H1 (cell line): ENCODE measurements at regions of chr15 and their contacts with region 1.

Region 1: DNA sequence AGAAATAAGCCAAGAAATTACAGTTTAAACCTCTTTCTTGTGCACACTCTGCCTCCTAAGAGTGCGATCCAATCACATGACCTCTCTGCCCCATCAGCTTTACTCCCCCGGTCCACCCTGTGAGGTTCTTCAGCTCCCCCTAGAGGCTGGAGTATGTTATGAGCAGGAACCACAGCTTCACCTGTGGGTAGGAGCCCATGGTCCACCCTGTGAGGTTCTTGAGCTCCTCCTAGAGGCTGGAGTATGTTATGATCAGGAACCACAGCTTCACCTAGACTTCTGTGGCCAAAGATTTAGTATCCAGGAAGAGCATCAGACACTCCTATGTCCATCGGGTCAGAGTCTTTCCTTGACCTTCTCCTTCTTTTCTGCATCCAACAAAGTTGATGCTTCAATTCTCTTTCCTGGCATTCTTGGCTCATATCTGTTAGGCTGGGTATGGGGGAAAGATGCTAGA is 163.9 kb downstream of the MINAR1 start:
- DNase-seq: peak; percentile 58 to 73
- H3K4me3 ChIP-seq: no peak overlapping the region
- H3K27ac ChIP-seq: no peak overlapping the region
- H3K4me1 ChIP-seq: no peaks in the 10 kb centered on the region
- H3K27me3 ChIP-seq: peaks cover 0 to under 1% (median 0%) of the 10 kb centered on the region in 4 experiments; a peak in 2 of 7 replicates
- CTCF ChIP-seq: peak; percentile 88 to 100 (median 100)
- EP300 ChIP-seq: no peak
- POLR2A ChIP-seq: no peak
- RAD21 ChIP-seq: peak; percentile 99 to 100

Region 2: GRCh38 chr15:79339564-79340314 is 256.3 kb before region 1 on chr15:
- CTCF ChIA-PET with region 1: interaction called, 137 read pairs
- POLR2A ChIA-PET with region 1: no interaction called
- DNase-seq: no peak
- H3K4me3 ChIP-seq: no peak overlapping the region
- H3K27ac ChIP-seq: no peak overlapping the region
- H3K4me1 ChIP-seq: no peaks in the 10 kb centered on the region
- H3K27me3 ChIP-seq: no peaks in the 10 kb centered on the region
- CTCF ChIP-seq: peak in 2 of 3 experiments; percentile 64 to 78; a peak in 2 of 4 replicates
- EP300 ChIP-seq: no peak
- POLR2A ChIP-seq: no peak
- RAD21 ChIP-seq: peak; percentile 82 to 86

Region 3: DNA sequence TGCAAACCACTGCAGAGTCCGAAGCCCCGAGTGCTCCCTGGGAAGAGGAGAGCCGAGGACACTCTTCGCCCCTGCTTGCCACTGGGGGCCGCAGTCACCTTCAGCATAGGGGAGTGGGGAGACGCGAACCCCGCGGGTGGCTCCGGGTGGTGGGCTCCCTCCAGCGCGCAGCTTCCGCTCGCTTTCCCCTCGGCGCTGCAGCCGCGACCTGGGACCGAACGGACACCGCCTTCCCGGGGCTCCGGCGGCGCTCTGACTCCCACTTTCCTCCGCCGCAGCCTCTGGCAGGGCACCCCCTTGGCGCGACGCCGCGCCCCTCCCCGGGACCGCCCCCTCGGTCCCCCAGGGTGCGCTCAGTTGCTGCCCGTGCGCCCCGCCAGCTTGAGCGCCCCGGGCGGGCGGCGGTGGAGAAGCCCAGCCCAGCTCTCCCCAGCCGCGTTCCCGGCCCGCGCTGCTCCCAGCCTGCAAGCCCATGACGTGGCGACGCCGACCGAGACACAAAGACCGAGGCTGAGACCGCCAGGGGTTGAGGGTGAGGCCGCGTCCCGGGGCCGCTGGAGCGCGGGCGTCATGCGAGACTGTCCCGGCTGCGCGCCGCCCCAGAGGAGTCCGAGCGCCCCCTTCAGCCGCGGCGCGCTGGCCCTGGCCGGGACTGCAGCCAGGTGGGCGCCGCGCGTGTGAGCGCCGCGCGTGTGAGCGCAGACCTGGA is 164.3 kb before region 1 on chr15 and contains the start of gene MINAR1:
- CTCF ChIA-PET with region 1: interaction called, 27 read pairs
- POLR2A ChIA-PET with region 1: interaction called, 3 read pairs
- DNase-seq: peak in 1 of 2 experiments; percentile 61
- H3K4me3 ChIP-seq: peak within 1 kb of the TSS; percentile 29 to 68 (median 46)
- H3K27ac ChIP-seq: no peak within 1 kb of the TSS
- H3K4me1 ChIP-seq: peaks cover 0 to 11% (median 6%) of the 10 kb centered on the region in 4 experiments; a peak in 6 of 7 replicates
- H3K27me3 ChIP-seq: peaks cover 34 to 57% (median 49%) of the 10 kb centered on the region in 4 experiments
- CTCF ChIP-seq: peak; percentile 6 to 40 (median 33); a peak in 3 of 4 replicates
- EP300 ChIP-seq: no peak
- POLR2A ChIP-seq: no peak
- RAD21 ChIP-seq: peak; percentile 19 to 48; a peak in 3 of 4 replicates
- total RNA-seq, gene MINAR1: 0.59 and 0.67 TPM in 2 replicates

Region 4: DNA sequence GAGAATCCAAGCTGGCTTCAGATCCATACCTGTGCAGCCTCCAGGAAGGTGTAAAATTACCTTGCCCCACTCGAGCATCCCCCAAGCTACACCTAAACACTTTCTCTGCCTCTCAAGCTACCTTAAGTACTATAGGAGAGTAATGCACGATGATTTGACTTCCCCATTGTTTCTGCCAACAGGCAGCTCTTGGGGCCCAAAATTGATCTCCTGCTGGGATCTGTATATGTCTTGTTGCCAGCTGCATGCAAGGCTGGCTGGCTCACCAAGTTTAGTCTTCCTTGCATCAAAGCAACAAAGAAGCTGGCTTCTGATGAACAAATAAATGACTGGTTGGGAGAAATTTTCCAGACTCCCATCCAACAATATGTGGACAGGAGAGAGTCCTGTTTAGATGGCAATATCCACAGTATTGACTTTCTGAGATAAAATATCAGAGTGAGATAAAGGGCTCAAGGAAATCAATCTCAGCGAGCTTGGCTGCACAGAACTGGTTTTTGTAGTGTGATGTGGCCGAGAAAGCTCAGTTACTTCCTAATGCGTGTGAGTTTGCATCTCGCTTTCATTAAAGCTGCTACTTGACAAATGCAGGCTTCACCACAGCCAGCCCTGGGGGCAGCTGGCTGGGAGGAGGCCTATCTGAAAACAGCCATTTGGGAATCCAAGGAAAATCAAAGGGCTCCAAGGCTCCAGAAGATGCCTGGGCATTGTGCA is 23.2 kb before region 1 on chr15:
- CTCF ChIA-PET with region 1: interaction called, 35 read pairs
- POLR2A ChIA-PET with region 1: no interaction called
- DNase-seq: no peak
- H3K4me3 ChIP-seq: no peak overlapping the region
- H3K27ac ChIP-seq: no peak overlapping the region
- H3K4me1 ChIP-seq: no peaks in the 10 kb centered on the region
- H3K27me3 ChIP-seq: no peaks in the 10 kb centered on the region
- CTCF ChIP-seq: no peak
- EP300 ChIP-seq: no peak
- POLR2A ChIP-seq: no peak
- RAD21 ChIP-seq: no peak

Region 5: DNA sequence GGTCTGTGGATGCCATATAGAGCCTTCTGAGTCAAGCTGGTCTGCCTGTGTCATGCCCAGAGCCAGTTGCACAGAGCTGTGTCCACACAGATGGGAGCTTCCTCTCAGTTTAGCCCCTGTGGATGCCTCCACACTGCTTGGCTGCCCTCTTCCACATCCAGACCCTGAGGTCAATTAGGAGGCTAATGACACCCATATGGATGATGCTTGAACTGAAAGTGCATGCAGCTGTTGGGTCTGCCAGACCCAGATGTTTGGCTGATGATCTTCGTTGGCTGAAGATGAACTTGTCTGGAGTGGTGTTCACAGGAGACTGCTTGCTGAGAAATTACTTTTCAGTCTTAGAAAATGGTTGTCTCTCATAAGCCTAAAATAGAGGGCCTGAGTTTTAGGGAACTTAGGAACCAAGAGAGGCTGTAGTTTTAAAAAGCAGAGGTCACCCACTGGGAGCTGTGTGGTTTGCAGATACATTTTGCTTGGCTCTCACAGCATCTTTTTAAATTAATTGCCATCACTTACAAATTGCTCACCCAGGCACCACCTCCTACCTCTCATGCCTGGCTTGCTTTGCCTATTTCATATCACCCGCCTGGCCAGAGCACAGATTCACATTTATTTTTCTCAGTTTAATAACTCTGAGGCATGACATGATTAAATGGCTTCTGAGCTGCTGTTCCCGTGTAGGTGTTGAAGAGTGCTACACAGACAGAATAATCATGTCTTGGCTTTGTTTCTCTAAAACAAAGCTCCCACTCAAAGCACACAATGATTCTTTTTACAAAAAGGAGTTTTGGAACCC is 12.2 kb after region 1 on chr15:
- CTCF ChIA-PET with region 1: interaction called, 18 read pairs
- POLR2A ChIA-PET with region 1: no interaction called
- DNase-seq: no peak
- H3K4me3 ChIP-seq: no peak overlapping the region
- H3K27ac ChIP-seq: no peak overlapping the region
- H3K4me1 ChIP-seq: peaks cover 0 to 2% (median 0%) of the 10 kb centered on the region in 4 experiments; a peak in 1 of 7 replicates
- H3K27me3 ChIP-seq: no peaks in the 10 kb centered on the region
- CTCF ChIP-seq: no peak
- EP300 ChIP-seq: no peak
- POLR2A ChIP-seq: no peak
- RAD21 ChIP-seq: no peak

Region 6: DNA sequence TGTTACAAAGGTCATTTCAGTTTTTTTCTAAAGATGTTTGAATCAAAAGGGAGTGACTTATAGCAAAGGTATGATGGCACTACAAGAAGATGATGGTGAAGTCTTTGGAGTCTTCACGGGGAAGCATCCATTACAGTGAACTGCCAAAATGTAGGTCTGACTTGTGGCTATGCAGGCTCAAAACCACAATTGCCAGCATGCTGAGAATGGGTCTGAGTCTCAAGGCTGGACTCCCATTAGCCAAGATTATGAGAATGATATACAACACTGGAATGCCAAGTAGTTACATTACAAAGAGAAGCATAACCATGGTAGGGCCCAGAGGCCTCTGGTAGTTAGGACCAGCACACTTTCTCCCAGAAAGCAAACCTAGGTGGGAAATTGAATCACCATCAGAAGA is 106.5 kb after region 1 on chr15:
- CTCF ChIA-PET with region 1: no interaction called
- POLR2A ChIA-PET with region 1: no interaction called
- DNase-seq: no peak
- H3K4me3 ChIP-seq: no peak overlapping the region
- H3K27ac ChIP-seq: no peak overlapping the region
- H3K4me1 ChIP-seq: no peaks in the 10 kb centered on the region
- H3K27me3 ChIP-seq: no peaks in the 10 kb centered on the region
- CTCF ChIP-seq: no peak
- EP300 ChIP-seq: no peak
- POLR2A ChIP-seq: no peak
- RAD21 ChIP-seq: no peak

Region 7: DNA sequence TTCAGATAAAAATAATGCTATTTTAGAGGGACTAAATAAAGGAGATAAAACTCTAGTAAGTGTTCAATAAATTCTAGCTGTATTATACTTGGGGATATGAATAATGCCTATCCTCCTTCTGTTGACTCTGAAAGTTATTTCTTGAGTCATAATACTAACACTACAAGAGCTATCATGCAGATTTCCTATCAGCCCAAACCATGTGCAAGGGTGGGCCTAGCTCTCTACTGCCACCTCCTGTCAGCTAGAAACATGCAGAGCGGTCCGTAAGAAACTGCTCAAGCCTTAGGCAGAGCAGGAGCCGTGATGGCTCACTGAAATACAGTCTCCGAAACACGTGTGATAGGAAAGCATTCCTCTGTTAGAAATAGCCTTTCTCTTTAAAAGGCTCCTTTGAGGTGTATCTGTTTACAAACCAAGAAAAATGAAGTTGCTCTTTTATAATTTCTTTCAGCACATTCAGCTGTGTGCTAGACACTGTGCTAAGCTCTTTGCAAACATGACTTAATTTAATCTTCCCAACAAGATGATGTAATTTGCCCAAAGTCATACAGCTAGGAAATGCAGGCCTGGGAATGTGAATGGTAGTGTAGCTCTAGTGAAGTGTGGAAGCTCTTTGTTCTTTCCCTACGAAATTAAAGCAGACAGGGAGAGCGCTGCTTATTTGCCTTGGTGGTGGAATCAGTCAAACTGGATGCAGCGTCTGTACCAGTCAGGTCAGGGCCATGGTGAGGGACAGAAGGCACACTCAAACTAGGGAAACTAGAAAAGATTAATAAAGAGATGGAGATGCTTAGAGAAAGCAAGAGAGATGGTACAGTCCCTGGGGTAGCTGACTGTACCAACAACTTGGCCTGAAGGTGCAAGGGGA is 257.6 kb after region 1 on chr15:
- CTCF ChIA-PET with region 1: interaction called, 16 read pairs
- POLR2A ChIA-PET with region 1: no interaction called
- DNase-seq: peak; percentile 54 to 59
- H3K4me3 ChIP-seq: no peak overlapping the region
- H3K27ac ChIP-seq: no peak overlapping the region
- H3K4me1 ChIP-seq: no peaks in the 10 kb centered on the region
- H3K27me3 ChIP-seq: no peaks in the 10 kb centered on the region
- CTCF ChIP-seq: peak; percentile 84 to 98 (median 85)
- EP300 ChIP-seq: no peak
- POLR2A ChIP-seq: no peak
- RAD21 ChIP-seq: peak; percentile 78 to 81